ENCODE measurements at regions of chr12 and their contacts with region 1.

Region 1: GRCh38 chr12:110320550-110320949 is 39.5 kb downstream of the ATP2A2 start:
- DNase-seq: no peak
- H3K4me3 ChIP-seq: no peak overlapping the region
- H3K27ac ChIP-seq: no peak overlapping the region
- H3K4me1 ChIP-seq: peaks cover 0 to 7% of the 10 kb centered on the region in 2 donors
- H3K27me3 ChIP-seq: no peaks in the 10 kb centered on the region
- CTCF ChIP-seq: no peak
- POLR2A ChIP-seq: no peak

Region 2: DNA sequence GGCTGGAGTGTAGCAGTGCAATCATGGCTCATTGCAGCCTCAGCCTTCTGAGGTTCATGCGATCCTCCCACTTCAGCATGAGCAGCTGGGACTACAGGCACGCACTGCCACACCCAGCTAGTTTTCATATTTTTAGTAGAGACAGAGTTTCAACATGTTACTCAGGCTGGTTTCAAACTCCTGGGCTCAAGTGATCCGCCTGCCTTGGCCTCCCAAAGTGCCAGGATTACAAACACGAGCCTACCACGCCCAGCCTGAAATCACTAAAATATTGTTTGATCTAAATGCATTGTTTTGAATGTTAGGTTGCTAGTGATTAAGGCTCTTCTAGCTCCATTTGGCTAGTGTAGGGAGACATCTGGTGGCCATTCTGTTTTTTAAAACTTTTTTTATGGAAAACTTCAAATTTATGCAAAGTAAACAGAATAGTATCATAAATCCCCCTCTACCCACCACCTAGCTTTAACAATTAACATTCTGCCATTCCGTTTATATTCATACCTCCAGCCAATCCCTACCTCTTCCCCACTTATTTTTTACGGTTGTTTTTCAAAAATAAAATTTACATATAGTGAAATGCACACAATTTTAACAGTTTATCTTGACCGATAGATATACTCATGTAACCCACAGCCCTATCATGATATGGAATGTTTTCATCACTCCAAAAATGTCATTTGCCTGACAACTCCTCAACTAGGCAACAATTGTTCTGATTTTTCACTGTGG is 935.0 kb before region 1 on chr12:
- intact Hi-C with region 1: loop called (anchors 10 kb)
- DNase-seq: no peak
- H3K4me3 ChIP-seq: no peak overlapping the region
- H3K27ac ChIP-seq: no peak overlapping the region
- H3K4me1 ChIP-seq: no peaks in the 10 kb centered on the region
- H3K27me3 ChIP-seq: no peaks in the 10 kb centered on the region
- CTCF ChIP-seq: peak in 2 of 3 donors; percentile 28 to 61
- POLR2A ChIP-seq: no peak

Region 3: DNA sequence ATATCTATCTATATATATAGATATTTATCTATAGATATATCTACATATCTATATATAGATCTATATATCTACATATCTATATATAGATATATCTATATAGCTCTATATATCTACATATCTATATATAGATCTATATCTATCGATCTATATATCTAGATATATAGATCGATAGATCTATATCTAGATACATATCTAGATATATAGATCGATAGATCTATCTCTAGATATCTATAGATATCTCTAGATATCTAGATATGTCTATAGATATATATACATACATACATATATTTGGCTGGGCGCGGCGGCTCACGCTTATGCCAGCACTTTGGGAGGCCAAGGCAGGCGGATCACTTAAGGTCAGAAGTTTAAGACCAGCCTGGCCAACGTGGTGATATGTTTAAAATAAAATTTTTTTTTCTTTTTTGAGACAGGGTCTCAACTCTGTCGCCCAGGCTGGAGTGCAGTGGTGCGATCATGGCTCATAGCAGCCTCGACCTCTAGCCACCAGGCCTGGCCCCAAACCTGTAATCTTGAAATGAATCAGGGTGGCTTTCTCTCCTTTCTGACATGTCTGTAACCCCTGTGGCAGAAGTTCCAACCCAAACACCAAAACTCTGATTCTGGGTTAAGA is 111.5 kb after region 1 on chr12:
- intact Hi-C with region 1: no loop called
- DNase-seq: no peak
- H3K4me3 ChIP-seq: peak overlapping the region; percentile 22 to 68 (median 59)
- H3K27ac ChIP-seq: peak overlapping the region in 1 of 2 donors; percentile 74
- H3K4me1 ChIP-seq: no peaks in the 10 kb centered on the region
- H3K27me3 ChIP-seq: no peaks in the 10 kb centered on the region
- CTCF ChIP-seq: no peak
- POLR2A ChIP-seq: no peak